Ascending aorta (tissue), 2 donors: ENCODE measurements at regions of chr2 and their contacts with region 1.

Region 1: DNA sequence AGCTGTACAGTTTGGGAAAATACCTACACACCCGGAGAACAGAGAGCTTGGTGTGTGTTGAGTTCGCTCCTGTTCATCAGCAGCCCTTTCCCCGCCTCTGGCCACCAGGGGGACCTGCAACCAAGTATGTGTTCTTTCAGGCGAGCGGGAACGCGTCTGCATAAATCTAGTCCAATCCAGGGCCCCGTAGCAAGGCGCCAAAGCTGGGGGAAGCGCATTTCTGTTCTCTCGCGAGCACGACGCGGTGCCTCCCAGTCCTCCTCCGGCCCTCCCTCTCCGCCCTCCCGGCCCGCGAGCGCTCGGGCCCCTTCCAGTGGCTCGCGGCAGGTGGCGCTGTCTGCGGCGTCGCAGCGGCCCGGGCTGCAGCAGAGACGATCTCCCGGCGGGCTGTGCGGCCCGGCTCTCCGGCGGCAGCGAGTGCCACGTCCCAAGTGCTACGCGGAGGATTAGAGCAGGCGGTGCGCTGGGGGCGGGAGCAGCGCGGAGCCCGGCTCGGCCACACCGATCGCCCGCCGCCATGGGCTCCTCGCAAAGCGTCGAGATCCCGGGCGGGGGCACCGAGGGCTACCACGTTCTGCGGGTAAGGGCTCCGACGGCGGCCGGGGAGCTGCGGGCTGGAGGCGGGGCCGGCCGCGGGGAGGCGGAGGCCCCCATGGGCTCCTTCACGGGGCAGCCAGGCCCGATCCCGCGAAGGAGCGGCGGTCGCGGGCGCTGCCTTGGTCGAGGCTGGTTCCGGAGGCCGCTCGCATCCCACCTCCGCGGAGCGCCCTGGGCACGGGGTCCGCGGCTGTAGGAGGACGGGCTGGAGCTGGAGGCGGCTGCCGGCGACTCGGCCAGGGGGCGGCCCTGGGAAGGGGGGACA is at the start of gene GORASP2:
- DNase-seq: peak; percentile 96 to 100
- H3K4me3 ChIP-seq: peak within 1 kb of the TSS; percentile 91 to 100
- H3K27ac ChIP-seq: peak within 1 kb of the TSS; percentile 96 to 100
- H3K4me1 ChIP-seq: peaks cover 3 to 21% of the 10 kb centered on the region in 2 donors
- H3K27me3 ChIP-seq: no peaks in the 10 kb centered on the region
- CTCF ChIP-seq: peak; percentile 90 to 96 (median 95)
- total RNA-seq, gene GORASP2: 21.5 TPM

Region 2: DNA sequence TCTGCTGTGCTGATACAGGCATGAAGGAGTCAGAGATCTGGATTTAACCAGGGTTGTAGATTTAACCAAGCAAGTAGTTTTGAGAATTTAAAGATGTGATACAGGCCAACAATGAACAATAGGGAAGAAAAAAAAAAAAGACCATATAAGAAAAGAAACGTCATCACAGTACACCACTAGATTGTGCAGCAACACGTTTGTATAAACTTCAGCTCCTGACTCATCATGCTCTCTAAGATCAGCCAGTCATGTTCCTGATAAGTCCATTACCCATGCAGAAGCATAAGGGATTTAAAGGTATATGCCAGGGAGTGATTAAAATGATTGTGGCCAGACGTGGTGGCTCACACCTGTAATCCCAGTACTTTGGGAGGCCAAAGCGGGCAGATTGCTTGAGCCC is 181.1 kb before region 1 on chr2:
- intact Hi-C with region 1: no loop called
- DNase-seq: no peak
- H3K4me3 ChIP-seq: no peak overlapping the region
- H3K27ac ChIP-seq: no peak overlapping the region
- H3K4me1 ChIP-seq: no peaks in the 10 kb centered on the region
- H3K27me3 ChIP-seq: no peaks in the 10 kb centered on the region
- CTCF ChIP-seq: no peak

Region 3: GRCh38 chr2:170973492-170974303 is 44.6 kb after region 1 on chr2:
- intact Hi-C with region 1: loop called (anchors 1 kb)
- DNase-seq: peak; percentile 18 to 90
- H3K4me3 ChIP-seq: peak overlapping the region; percentile 77 to 92
- H3K27ac ChIP-seq: peak overlapping the region; percentile 76 to 77
- H3K4me1 ChIP-seq: peaks cover 0 to 7% of the 10 kb centered on the region in 2 donors
- H3K27me3 ChIP-seq: no peaks in the 10 kb centered on the region
- CTCF ChIP-seq: peak; percentile 74 to 97 (median 80)

Region 4: GRCh38 chr2:171416009-171416926 is 487.2 kb after region 1 on chr2:
- intact Hi-C with region 1: loop called (anchors 5 kb)
- DNase-seq: peak; percentile 49 to 93
- H3K4me3 ChIP-seq: no peak overlapping the region
- H3K27ac ChIP-seq: peak overlapping the region in 1 of 2 donors; percentile 67
- H3K4me1 ChIP-seq: no peaks in the 10 kb centered on the region
- H3K27me3 ChIP-seq: no peaks in the 10 kb centered on the region
- CTCF ChIP-seq: peak; percentile 75 to 84 (median 76)

Region 5: GRCh38 chr2:171522052-171522787 is 593.2 kb after region 1 on chr2 and contains the start of gene CYBRD1:
- intact Hi-C with region 1: loop called (anchors 1 kb)
- DNase-seq: peak; percentile 47 to 93
- H3K4me3 ChIP-seq: peak within 1 kb of the TSS; percentile 72 to 90
- H3K27ac ChIP-seq: peak within 1 kb of the TSS; percentile 94 to 97
- H3K4me1 ChIP-seq: peaks cover 0 to 23% of the 10 kb centered on the region in 2 donors
- H3K27me3 ChIP-seq: no peaks in the 10 kb centered on the region
- CTCF ChIP-seq: no peak
- total RNA-seq, gene CYBRD1: 222 TPM

Region 6: GRCh38 chr2:172095146-172095904 is 1166.3 kb after region 1 on chr2:
- intact Hi-C with region 1: loop called (anchors 10 kb)
- DNase-seq: no peak
- H3K4me3 ChIP-seq: peak overlapping the region; percentile 48 to 67
- H3K27ac ChIP-seq: no peak overlapping the region
- H3K4me1 ChIP-seq: peaks cover 30 to 48% of the 10 kb centered on the region in 2 donors
- H3K27me3 ChIP-seq: peaks cover 66% of the 10 kb centered on the region
- CTCF ChIP-seq: no peak